AG04450 (cell line): ENCODE measurements at regions of chr17 and their contacts with region 1.

Region 1: GRCh38 chr17:47889734-47890529 is 6.1 kb upstream of the SP2 start:
- DNase-seq: peak; percentile 69
- H3K4me3 ChIP-seq: no peak overlapping the region
- H3K27ac ChIP-seq: no peak overlapping the region
- H3K27me3 ChIP-seq: no peaks in the 10 kb centered on the region
- CTCF ChIP-seq: peak; percentile 94

Region 2: DNA sequence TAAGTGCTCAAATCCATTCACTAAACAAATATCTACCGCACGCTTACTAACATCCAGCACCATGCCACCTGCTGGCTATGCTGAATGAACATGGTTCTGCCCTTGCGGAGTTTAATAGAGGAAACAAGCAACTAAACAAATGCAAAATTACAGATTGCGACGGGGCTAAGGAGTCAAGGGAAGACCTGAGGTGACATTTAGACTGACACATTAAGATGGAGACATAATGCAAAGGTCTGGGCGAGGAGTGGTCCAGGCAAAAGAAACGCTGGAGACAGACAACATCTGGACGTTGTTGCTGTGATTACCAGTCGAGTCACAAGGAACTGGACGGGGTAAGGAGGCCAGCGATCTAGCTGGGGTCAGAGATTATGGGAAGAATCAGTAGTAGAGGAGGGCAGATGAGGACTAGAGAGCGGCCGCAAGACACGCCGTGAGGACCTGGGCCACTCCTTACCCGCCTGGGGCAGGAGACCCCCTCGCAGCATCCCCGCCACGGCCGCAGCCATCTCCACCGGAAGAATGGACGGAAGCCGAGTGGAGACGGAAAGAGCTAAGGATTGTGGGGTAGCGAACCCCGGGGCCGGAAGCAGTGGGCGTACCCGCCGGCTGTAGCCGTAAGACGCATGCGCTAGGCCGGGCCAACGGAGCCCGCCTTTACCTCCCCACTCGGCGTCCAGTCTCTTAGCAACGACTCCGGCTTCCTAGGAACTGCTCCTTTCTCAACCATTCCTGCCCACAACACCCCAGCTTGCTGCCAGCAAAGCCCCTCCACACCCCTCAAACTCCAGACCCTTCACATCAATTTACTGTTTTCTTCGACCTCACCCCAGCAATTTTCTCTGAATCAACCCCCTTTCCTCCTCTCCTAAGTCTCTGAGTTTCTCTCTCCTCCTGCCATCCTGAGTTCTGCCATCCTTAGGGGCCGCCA is 58.7 kb before region 1 on chr17 and contains the starts of genes LRRC46 and MRPL10:
- CTCF ChIA-PET with region 1: interaction called, 25 read pairs
- POLR2A ChIA-PET with region 1: interaction called, 8 read pairs
- DNase-seq: peak; percentile 82
- H3K4me3 ChIP-seq: peak within 1 kb of the TSS; percentile 98
- H3K27ac ChIP-seq: peak within 1 kb of the TSS; percentile 82
- H3K27me3 ChIP-seq: no peaks in the 10 kb centered on the region
- CTCF ChIP-seq: peak; percentile 52
- polyA plus RNA-seq, gene LRRC46: 0.55 and 0.67 TPM in 2 replicates
- polyA plus RNA-seq, gene MRPL10: 62.9 and 64.4 TPM in 2 replicates

Region 3: GRCh38 chr17:47840740-47841603 is 49.0 kb before region 1 on chr17 and contains the start of gene SCRN2:
- CTCF ChIA-PET with region 1: interaction called, 502 read pairs
- POLR2A ChIA-PET with region 1: interaction called, 11 read pairs
- DNase-seq: peak; percentile 34
- H3K4me3 ChIP-seq: peak within 1 kb of the TSS; percentile 82
- H3K27ac ChIP-seq: no peak within 1 kb of the TSS
- H3K27me3 ChIP-seq: peaks cover 14% of the 10 kb centered on the region
- CTCF ChIP-seq: peak; percentile 98
- polyA plus RNA-seq, gene SCRN2: 13.3 and 17.2 TPM in 2 replicates

Region 4: DNA sequence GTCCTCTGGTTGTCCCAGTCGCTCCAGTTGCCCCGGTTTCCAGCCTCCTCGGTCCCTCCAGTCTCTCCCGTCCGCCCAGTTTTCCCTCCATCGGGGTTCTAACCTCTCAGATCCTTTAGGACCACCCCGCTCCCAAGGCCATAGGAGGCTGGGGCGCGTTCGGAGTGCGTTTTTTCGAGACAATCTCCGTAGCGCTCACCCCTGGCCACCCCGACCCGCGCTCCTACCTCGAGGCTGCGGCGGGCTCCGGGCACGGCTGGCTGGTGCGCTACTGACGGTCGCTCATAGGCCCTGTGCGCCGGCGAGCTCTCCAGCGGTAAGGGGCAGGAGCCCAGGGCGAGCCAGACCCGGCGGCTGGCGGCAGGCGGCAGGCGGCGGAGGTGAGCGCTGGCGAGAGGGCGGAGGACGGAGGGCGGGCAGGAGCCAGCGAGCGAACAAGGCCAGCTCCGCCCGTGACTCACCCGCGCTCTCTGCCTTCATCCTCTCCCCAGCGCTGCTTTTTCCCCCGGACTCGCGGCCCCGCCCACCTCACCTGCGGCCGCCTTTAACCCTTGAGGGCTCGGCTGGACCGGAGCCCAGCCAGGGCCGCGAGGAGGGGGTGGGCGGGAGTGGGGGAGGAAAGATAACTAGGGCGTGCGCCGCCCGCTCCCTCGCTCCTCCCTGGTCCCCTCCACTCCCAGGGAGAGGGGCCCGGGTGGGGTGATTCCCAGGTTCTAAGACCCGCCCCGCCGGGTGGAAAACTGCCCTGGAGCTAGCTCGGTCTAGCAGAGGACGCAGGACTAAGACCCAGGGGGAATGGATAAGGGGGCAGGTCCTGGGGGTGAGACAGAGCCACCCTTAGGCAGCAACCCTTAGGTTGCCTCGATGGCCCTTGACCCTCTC is 39.0 kb before region 1 on chr17 and contains the start of gene SP6:
- CTCF ChIA-PET with region 1: interaction called, 502 read pairs
- POLR2A ChIA-PET with region 1: interaction called, 4 read pairs
- DNase-seq: no peak
- H3K4me3 ChIP-seq: peak within 1 kb of the TSS; percentile 31
- H3K27ac ChIP-seq: no peak within 1 kb of the TSS
- H3K27me3 ChIP-seq: peaks cover 79% of the 10 kb centered on the region
- CTCF ChIP-seq: 0 out of 2 replicates have a peak, but pooled peaks have one; percentile 8
- polyA plus RNA-seq, gene SP6: 0.04 and 0.05 TPM in 2 replicates

Region 5: DNA sequence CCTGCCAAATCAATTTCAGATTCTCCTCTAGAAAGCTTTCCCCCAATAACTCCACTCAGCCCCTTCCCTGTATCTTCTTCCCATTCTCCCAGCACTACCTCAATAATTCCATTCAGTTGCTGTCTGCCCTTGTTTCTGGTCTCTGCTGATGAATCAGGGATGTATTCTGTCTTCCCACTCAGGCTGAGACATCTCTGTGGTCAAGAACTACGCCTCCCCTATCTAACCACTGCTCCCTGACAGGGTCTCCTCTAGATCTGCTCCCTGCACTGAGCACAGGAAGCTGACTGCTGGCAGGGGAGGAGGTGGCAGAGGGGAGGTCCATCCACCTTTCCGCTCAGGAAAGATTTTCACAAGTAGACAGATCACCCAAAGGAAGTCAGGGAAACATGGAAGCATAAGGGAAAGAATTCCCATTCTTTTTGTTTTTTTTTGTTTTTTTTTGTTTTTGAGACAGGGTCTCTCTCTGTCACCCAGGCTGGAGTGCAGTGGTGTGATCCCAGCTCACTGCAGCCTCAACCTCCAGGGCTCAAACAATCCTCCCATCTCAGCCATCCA is 10.8 kb before region 1 on chr17:
- CTCF ChIA-PET with region 1: interaction called, 17 read pairs
- POLR2A ChIA-PET with region 1: no interaction called
- DNase-seq: no peak
- H3K4me3 ChIP-seq: no peak overlapping the region
- H3K27ac ChIP-seq: no peak overlapping the region
- H3K27me3 ChIP-seq: peaks cover 3% of the 10 kb centered on the region
- CTCF ChIP-seq: no peak

Region 6: DNA sequence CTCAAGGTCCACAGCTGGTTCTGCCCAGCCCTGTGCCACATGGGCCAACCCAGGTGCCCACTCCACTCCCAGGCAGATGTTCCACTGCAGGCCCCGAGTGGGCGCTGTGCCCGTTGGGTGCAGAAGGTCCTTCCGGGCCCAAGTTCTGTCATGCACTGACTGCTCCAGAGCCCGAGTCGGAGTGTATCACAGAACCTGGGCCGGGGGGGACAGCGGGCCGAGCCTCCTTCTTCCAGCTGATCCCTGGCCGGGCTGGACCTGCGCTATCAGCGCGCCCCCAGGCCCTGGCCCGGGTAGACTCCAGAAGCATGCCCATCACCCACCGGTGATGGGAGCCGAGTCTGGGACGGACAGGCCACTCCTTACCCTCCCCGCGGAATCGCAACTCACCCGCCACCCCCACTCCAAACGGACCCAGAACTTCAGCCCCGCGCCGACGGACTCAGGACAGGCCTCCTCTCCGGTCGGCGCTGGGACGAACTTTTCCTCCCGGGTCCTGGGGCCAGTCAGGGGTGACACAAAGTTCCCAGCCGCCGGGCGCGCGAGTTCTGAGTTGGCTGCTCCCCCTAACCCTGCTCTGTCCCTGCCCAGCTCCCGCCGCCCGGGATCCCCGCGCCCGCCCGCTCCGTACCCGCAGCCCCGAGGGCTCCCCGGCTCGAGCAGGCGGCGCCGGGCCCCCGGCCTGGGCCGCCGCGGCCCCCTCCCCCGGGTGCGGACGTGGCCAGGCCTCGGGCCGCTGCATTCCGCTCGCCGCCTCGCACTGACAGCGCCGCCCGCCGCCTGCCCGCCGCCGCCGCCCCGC is 147.3 kb after region 1 on chr17 and contains the start of gene COPZ2:
- CTCF ChIA-PET with region 1: no interaction called
- POLR2A ChIA-PET with region 1: no interaction called
- DNase-seq: no peak
- H3K4me3 ChIP-seq: peak within 1 kb of the TSS; percentile 70
- H3K27ac ChIP-seq: peak within 1 kb of the TSS; percentile 57
- H3K27me3 ChIP-seq: no peaks in the 10 kb centered on the region
- CTCF ChIP-seq: peak; percentile 57
- polyA plus RNA-seq, gene COPZ2: 107 and 122 TPM in 2 replicates